ENCODE measurements at regions of chr19 and their contacts with region 1.

Region 1: GRCh38 chr19:9140159-9140874 is at the start of gene ZNF317:
- DNase-seq: peak; percentile 88 to 95 (median 89)
- H3K4me3 ChIP-seq: peak within 1 kb of the TSS; percentile 82 to 88
- H3K4me3 Mint-ChIP-seq: peak within 1 kb of the TSS; percentile 95 to 99 (median 98)
- H3K27ac ChIP-seq: peak within 1 kb of the TSS; percentile 96
- H3K27ac Mint-ChIP-seq: peak within 1 kb of the TSS; percentile 95 to 99 (median 98)
- H3K4me1 ChIP-seq: peaks cover 25% of the 10 kb centered on the region
- H3K4me1 Mint-ChIP-seq: peaks cover 29 to 48% (median 37%) of the 10 kb centered on the region in 4 donors
- H3K27me3 ChIP-seq: no peaks in the 10 kb centered on the region
- H3K27me3 Mint-ChIP-seq: peaks cover 1 to 2% of the 10 kb centered on the region in 2 donors
- total RNA-seq, gene ZNF317: 52.1 to 52.4 TPM

Region 2: DNA sequence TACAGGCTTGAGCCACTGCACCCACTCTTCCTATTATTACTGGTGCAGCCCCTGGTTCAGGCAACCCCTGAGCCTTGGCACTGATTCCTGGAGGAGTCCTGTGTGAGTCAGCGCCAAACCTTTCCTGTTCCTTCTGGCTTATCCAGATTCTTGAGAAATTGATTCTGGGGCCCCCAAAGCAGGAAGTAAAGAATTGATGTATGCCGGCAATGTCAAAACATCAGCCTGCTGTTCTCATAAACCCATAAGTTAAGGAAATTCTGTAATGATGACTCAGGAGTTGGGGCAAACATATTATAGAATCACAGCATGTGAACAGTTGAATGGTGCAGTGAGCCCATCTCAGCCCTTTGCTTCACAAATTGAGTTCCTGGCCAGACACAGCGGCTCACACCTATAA is 12.1 kb before region 1 on chr19:
- CTCF ChIA-PET with region 1: no interaction called
- POLR2A ChIA-PET with region 1: no interaction called
- intact Hi-C with region 1: no loop called
- DNase-seq: no peak
- H3K4me3 ChIP-seq: no peak overlapping the region
- H3K4me3 Mint-ChIP-seq: no peak overlapping the region
- H3K27ac ChIP-seq: no peak overlapping the region
- H3K27ac Mint-ChIP-seq: no peak overlapping the region
- H3K4me1 ChIP-seq: no peaks in the 10 kb centered on the region
- H3K4me1 Mint-ChIP-seq: peaks cover 0 to 8% (median 5%) of the 10 kb centered on the region in 4 donors
- H3K27me3 ChIP-seq: no peaks in the 10 kb centered on the region
- H3K27me3 Mint-ChIP-seq: peaks cover 14 to 23% of the 10 kb centered on the region in 2 donors

Region 3: GRCh38 chr19:9151367-9151766 is 11.1 kb after region 1 on chr19:
- CTCF ChIA-PET with region 1: no interaction called
- POLR2A ChIA-PET with region 1: no interaction called
- intact Hi-C with region 1: no loop called
- DNase-seq: no peak
- H3K4me3 ChIP-seq: no peak overlapping the region
- H3K4me3 Mint-ChIP-seq: peak overlapping the region in 1 of 8 donors; percentile 4
- H3K27ac ChIP-seq: no peak overlapping the region
- H3K27ac Mint-ChIP-seq: peak overlapping the region in 1 of 7 donors; percentile 23
- H3K4me1 ChIP-seq: peaks cover 17% of the 10 kb centered on the region
- H3K4me1 Mint-ChIP-seq: peaks cover 39 to 73% (median 64%) of the 10 kb centered on the region in 4 donors
- H3K27me3 ChIP-seq: no peaks in the 10 kb centered on the region
- H3K27me3 Mint-ChIP-seq: no peaks in the 10 kb centered on the region

Region 4: DNA sequence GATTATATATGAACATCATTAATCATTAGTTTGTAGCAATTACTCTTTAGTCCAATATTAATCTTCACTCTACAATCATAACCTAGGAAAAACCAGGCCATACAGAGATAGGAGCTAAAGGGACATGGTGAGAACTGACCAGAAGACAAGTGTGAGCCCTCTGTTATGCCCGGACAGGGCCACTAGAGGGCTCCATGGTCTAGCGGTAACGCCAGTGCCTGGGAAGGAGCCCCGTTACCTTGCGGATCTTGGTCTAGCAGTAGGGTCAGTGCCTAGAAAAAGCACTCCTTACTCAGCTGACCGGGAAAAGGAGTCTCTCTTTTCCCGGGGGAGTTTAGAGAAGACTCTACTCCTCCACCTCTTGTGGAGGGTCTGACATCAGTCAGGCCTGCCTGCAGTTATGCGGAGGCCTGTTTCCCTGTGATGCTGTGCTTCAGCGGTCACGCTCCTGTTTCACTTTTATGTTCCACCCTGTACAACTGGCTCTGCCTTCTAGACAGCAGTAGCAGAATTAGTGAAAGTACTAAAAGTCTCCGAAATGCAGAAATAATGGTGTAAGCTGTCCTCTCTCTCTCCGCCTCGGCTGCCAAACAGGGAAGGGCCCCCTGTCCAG is 65.3 kb after region 1 on chr19:
- CTCF ChIA-PET with region 1: no interaction called
- POLR2A ChIA-PET with region 1: no interaction called
- intact Hi-C with region 1: loop called (anchors 1 kb)
- DNase-seq: peak; percentile 43 to 59 (median 52)
- H3K4me3 ChIP-seq: no peak overlapping the region
- H3K4me3 Mint-ChIP-seq: peak overlapping the region in 7 of 8 donors; percentile 6 to 62 (median 57)
- H3K27ac ChIP-seq: no peak overlapping the region
- H3K27ac Mint-ChIP-seq: no peak overlapping the region
- H3K4me1 ChIP-seq: peaks cover 4% of the 10 kb centered on the region
- H3K4me1 Mint-ChIP-seq: peaks cover 0 to 9% (median 3%) of the 10 kb centered on the region in 4 donors
- H3K27me3 ChIP-seq: no peaks in the 10 kb centered on the region
- H3K27me3 Mint-ChIP-seq: peaks cover 0 to 13% of the 10 kb centered on the region in 2 donors

Region 5: GRCh38 chr19:9584073-9584833 is 443.9 kb after region 1 on chr19 and contains the start of gene ZNF121:
- CTCF ChIA-PET with region 1: no interaction called
- POLR2A ChIA-PET with region 1: no interaction called
- intact Hi-C with region 1: loop called (anchors 1 kb)
- DNase-seq: peak; percentile 67 to 76 (median 73)
- H3K4me3 ChIP-seq: peak within 1 kb of the TSS; percentile 99 to 100
- H3K4me3 Mint-ChIP-seq: peak within 1 kb of the TSS; percentile 94 to 99 (median 97)
- H3K27ac ChIP-seq: peak within 1 kb of the TSS; percentile 97
- H3K27ac Mint-ChIP-seq: peak within 1 kb of the TSS; percentile 96 to 99 (median 98)
- H3K4me1 ChIP-seq: peaks cover 26% of the 10 kb centered on the region
- H3K4me1 Mint-ChIP-seq: peaks cover 21 to 55% (median 34%) of the 10 kb centered on the region in 4 donors
- H3K27me3 ChIP-seq: no peaks in the 10 kb centered on the region
- H3K27me3 Mint-ChIP-seq: peaks cover 2 to 4% of the 10 kb centered on the region in 2 donors
- total RNA-seq, gene ZNF121: 47.2 to 53.0 TPM

Region 6: GRCh38 chr19:9621156-9622037 is 481.1 kb after region 1 on chr19 and contains the start of gene ZNF561:
- CTCF ChIA-PET with region 1: no interaction called
- POLR2A ChIA-PET with region 1: no interaction called
- intact Hi-C with region 1: loop called (anchors 1 kb)
- DNase-seq: peak; percentile 89 to 92 (median 90)
- H3K4me3 ChIP-seq: peak within 1 kb of the TSS; percentile 87 to 94
- H3K4me3 Mint-ChIP-seq: peak within 1 kb of the TSS; percentile 96 to 100 (median 99)
- H3K27ac ChIP-seq: peak within 1 kb of the TSS; percentile 88
- H3K27ac Mint-ChIP-seq: peak within 1 kb of the TSS; percentile 100
- H3K4me1 ChIP-seq: peaks cover 21% of the 10 kb centered on the region
- H3K4me1 Mint-ChIP-seq: peaks cover 16 to 29% (median 22%) of the 10 kb centered on the region in 4 donors
- H3K27me3 ChIP-seq: no peaks in the 10 kb centered on the region
- H3K27me3 Mint-ChIP-seq: peaks cover 0 to 3% of the 10 kb centered on the region in 2 donors
- total RNA-seq, gene ZNF561: 67.2 to 75.8 TPM

Region 7: GRCh38 chr19:10027158-10027693 is 886.9 kb after region 1 on chr19:
- CTCF ChIA-PET with region 1: no interaction called
- POLR2A ChIA-PET with region 1: no interaction called
- intact Hi-C with region 1: loop called (anchors 2 kb)
- DNase-seq: no peak
- H3K4me3 ChIP-seq: no peak overlapping the region
- H3K4me3 Mint-ChIP-seq: no peak overlapping the region
- H3K27ac ChIP-seq: no peak overlapping the region
- H3K27ac Mint-ChIP-seq: no peak overlapping the region
- H3K4me1 ChIP-seq: peaks cover 7% of the 10 kb centered on the region
- H3K4me1 Mint-ChIP-seq: peaks cover 0 to 4% (median 2%) of the 10 kb centered on the region in 4 donors
- H3K27me3 ChIP-seq: peaks cover 8% of the 10 kb centered on the region
- H3K27me3 Mint-ChIP-seq: peaks cover 15 to 18% of the 10 kb centered on the region in 2 donors